Activated T-helper 2 cell treated with anti-CD3 and anti-CD28 coated beads, Interferon-gamma antibody, Interleukin-2, Interleukin-4, amounts not matched to agents 10 μg/mL and 5 μg/mL and 100 μg/mL, durations not matched to agents 14 hours and 24 hours and 36 hours (primary cell): ENCODE measurements at regions of chr17 and their contacts with region 1.

Region 1: GRCh38 chr17:51000835-51001638 is 119.6 kb downstream of the SPAG9 start:
- DNase-seq: no peak
- H3K4me3 Mint-ChIP-seq: no peak overlapping the region
- H3K27ac Mint-ChIP-seq: no peak overlapping the region
- H3K4me1 Mint-ChIP-seq: peaks cover 4% of the 10 kb centered on the region
- H3K27me3 Mint-ChIP-seq: no peaks in the 10 kb centered on the region

Region 2: DNA sequence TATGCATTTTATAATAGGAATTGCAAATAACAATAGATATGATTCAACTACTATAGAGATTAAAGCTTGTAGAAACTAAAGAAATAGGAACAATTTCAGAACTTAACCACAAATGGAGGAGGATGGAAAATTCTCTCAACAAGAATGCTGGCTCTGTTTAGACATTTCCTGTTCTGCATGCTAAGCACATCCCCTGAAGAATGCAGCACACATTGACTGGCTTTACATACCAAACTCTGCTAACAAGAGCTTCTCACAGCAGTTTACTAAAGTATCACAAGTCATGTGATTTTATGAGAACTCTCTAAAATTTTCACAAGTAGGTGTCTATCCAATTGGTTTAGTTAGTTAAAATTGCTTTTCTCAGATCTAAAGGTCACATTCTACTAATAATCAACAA is 34.4 kb after region 1 on chr17:
- intact Hi-C with region 1: no loop called
- DNase-seq: no peak
- H3K4me3 Mint-ChIP-seq: no peak overlapping the region
- H3K27ac Mint-ChIP-seq: no peak overlapping the region
- H3K4me1 Mint-ChIP-seq: peaks cover 28% of the 10 kb centered on the region
- H3K27me3 Mint-ChIP-seq: no peaks in the 10 kb centered on the region

Region 3: DNA sequence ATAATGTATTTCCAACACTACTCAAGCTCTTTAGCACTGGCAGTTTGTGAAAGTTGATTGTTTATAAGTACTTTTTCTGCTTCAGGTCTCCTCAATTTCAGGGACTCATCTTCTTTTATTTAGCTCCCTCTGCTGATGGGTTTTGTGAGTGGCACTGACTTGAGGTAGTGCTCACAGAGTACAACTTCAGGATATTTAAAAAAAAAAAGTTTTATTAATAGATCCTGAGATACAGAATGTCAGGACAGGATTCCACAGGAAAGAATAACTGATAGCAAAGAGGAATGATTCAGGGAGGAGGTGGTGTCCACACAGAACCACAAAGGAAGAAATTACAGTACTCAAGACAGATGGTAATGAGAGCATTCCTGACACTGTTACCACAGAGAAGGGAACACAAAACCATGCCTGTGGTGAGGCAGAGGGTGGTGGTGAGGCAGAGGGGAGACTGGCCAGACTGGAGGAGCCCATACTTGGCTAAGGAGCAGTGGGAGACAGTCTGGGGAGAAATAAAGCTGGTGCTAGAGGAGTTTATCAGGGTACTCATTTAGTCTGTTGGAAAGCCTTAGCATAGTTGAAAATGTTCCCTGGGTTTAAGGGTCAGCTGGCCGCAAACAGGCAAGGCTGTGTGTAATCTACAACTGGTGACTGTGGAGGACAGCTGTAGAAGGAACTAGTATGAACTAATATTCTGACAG is 55.9 kb after region 1 on chr17:
- intact Hi-C with region 1: loop called (anchors 1 kb)
- DNase-seq: no peak
- H3K4me3 Mint-ChIP-seq: no peak overlapping the region
- H3K27ac Mint-ChIP-seq: no peak overlapping the region
- H3K4me1 Mint-ChIP-seq: peaks cover 7% of the 10 kb centered on the region
- H3K27me3 Mint-ChIP-seq: no peaks in the 10 kb centered on the region

Region 4: GRCh38 chr17:51166197-51166986 is 165.4 kb after region 1 on chr17 and contains the start of gene NME2:
- intact Hi-C with region 1: loop called (anchors 5 kb)
- DNase-seq: peak; percentile 68
- H3K4me3 Mint-ChIP-seq: peak within 1 kb of the TSS; percentile 89
- H3K27ac Mint-ChIP-seq: peak within 1 kb of the TSS; percentile 90
- H3K4me1 Mint-ChIP-seq: peaks cover 26% of the 10 kb centered on the region
- H3K27me3 Mint-ChIP-seq: no peaks in the 10 kb centered on the region
- total RNA-seq, gene NME2: 708 and 735 TPM in 2 replicates